CD14-positive monocyte (primary cell): ENCODE measurements at regions of chr10 and their contacts with region 1.

Region 1: DNA sequence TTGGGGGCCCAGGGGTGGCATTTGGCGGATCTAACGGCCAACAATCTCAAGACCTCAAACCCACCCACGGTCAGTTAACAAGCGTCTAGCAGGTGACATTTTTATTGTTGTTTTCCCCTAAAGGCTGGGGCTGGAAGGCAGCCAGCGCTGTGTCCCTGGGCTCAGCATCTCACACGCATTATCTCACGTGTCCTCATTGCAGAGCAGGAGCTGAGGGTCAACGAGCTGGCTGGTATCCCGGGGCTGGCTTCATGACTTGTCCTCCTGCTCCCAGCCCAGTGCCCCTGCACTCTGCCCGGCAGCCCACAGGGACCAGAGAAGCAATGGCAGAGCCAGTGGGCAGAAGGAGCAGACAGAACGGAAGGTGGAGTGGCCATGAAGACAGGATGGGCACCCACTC is 54.4 kb upstream of the TMEM273 start:
- DNase-seq: no peak
- H3K4me3 ChIP-seq: peak overlapping the region in 1 of 3 experiments; percentile 3
- H3K4me3 Mint-ChIP-seq: no peak overlapping the region
- H3K27ac ChIP-seq: peak overlapping the region; percentile 57 to 71
- H3K27ac Mint-ChIP-seq: peak overlapping the region in 6 of 7 donors; percentile 80 to 96 (median 87)
- H3K4me1 ChIP-seq: peaks cover 50 to 55% of the 10 kb centered on the region in 2 donors
- H3K4me1 Mint-ChIP-seq: peaks cover 54% of the 10 kb centered on the region
- H3K27me3 ChIP-seq: no peaks in the 10 kb centered on the region
- H3K27me3 Mint-ChIP-seq: peaks cover 0 to 5% (median 0%) of the 10 kb centered on the region in 3 donors
- CTCF ChIP-seq: no peak

Region 2: DNA sequence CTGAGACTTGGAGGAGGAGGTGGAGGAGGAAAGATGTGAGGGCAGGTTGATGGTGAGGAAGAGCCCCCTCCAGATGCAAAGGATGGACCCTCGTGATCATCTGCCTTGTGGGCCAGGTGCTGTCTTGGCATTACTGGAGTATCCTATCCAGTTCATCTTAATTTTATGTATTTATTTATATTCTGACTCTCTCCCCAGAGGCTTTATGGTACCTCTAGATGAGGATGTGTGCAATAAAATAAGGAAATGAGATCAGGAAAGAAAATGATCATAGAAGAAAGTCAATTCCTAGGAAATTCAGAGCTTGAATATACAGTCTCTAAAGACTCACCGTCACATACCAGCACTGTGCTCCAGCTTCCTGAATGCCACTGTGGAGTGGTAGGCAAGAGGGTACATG is 397.1 kb before region 1 on chr10:
- intact Hi-C with region 1: no loop called
- DNase-seq: no peak
- H3K4me3 ChIP-seq: no peak overlapping the region
- H3K4me3 Mint-ChIP-seq: no peak overlapping the region
- H3K27ac ChIP-seq: no peak overlapping the region
- H3K27ac Mint-ChIP-seq: peak overlapping the region in 2 of 7 donors; percentile 11 to 31
- H3K4me1 ChIP-seq: no peaks in the 10 kb centered on the region
- H3K4me1 Mint-ChIP-seq: no peaks in the 10 kb centered on the region
- H3K27me3 ChIP-seq: no peaks in the 10 kb centered on the region
- H3K27me3 Mint-ChIP-seq: peaks cover 0 to 2% (median 0%) of the 10 kb centered on the region in 3 donors
- CTCF ChIP-seq: no peak

Region 3: DNA sequence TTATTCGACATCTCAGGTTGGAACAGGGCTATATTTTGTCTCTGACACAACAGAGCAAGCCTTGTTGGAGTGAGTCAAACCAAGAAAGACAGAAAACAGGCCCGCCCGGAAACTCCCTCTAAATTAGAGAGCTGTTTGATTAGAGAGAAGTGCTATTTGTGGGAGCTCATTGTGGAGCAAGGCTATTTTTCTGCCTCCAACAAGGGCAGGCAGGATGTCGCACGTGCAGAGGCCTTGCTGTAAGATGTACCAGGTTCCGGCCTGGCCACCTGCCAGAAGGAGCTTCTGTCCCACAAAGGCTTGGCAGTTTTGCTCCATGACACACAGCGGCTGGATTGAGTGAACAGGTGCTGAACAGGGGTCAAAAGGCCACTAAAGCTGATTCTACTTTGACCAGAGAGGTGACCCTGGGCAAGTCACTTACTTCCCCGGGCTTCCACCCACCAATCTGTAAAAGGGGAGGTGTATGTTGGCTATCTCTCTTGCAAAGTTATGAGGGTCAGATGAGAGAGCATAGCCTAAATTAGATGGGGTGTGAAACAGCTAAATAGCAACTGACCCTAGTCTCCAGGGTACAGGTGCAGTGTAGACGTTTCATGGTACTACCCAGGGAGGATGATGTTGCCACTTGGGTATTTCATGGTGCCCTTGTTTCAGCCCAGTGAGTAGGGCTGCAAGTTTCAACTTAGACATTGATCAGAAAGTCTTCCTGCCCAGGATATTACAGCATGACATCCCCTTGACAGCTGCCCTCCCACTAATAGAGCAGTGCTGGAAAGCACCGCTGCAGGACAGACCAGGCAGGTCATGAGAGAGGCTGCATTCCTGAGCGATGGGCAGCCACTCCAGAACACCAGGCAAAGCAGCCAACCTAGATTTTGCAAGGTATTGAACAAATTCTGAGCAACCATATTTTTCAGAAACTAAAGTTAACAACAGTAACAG is 189.3 kb before region 1 on chr10:
- intact Hi-C with region 1: no loop called
- DNase-seq: no peak
- H3K4me3 ChIP-seq: no peak overlapping the region
- H3K4me3 Mint-ChIP-seq: no peak overlapping the region
- H3K27ac ChIP-seq: no peak overlapping the region
- H3K27ac Mint-ChIP-seq: no peak overlapping the region
- H3K4me1 ChIP-seq: no peaks in the 10 kb centered on the region
- H3K4me1 Mint-ChIP-seq: no peaks in the 10 kb centered on the region
- H3K27me3 ChIP-seq: no peaks in the 10 kb centered on the region
- H3K27me3 Mint-ChIP-seq: peaks cover 0 to 6% (median 0%) of the 10 kb centered on the region in 3 donors
- CTCF ChIP-seq: no peak

Region 4: GRCh38 chr10:49194212-49194920 is 48.2 kb before region 1 on chr10:
- intact Hi-C with region 1: loop called in 1 of 2 experiments (anchors 2 kb)
- DNase-seq: no peak
- H3K4me3 ChIP-seq: no peak overlapping the region
- H3K4me3 Mint-ChIP-seq: no peak overlapping the region
- H3K27ac ChIP-seq: no peak overlapping the region
- H3K27ac Mint-ChIP-seq: peak overlapping the region in 2 of 7 donors; percentile 36 to 47
- H3K4me1 ChIP-seq: peaks cover 22 to 25% of the 10 kb centered on the region in 2 donors
- H3K4me1 Mint-ChIP-seq: peaks cover 26% of the 10 kb centered on the region
- H3K27me3 ChIP-seq: no peaks in the 10 kb centered on the region
- H3K27me3 Mint-ChIP-seq: peaks cover 3 to 7% (median 4%) of the 10 kb centered on the region in 3 donors
- CTCF ChIP-seq: no peak